Activated CD4-positive, alpha-beta T cell treated with anti-CD3 and anti-CD28 coated beads, Interleukin-2, amount 10 ng/mL, durations not matched to agents 24 days and 14 days (primary cell): ENCODE measurements at regions of chr2 and their contacts with region 1.

Region 1: DNA sequence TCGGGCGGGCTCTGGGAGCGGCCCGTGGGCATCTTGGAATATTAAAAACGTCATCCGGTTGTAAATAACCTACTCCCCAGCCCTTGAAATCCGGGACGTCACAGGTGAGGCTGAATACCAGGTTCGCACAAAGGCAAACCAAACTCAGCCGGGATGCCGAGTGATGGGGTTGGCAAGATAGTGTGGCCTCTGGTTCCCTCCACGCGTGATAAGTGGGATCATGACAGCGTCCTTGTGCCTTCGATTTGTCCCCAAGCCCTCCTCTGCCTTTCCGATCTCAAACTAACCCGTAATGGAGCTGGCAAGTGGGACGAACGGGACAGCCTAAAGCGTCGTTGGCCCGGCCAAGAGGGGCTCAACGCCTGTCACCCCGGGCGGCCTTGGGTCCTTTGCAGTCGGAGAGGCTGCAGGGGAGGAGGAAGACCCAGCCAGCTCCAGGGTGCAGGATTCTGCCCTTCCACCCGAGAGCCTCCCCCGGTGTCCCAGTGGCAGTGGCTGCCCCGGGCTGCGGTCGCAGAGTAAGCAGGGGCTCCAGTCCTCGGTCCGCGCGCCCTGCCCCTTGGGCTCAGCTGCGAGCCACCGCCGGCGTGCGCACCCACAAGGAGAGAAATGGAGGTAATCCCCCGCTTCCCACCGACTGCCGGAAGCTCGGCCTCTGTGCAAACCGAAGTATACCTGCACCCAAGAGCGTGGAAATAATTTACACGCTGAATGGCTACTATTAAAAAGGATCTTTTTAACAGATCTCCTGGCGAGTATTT is 13.4 kb upstream of the PAX3 start:
- DNase-seq: no peak
- H3K4me3 Mint-ChIP-seq: no peak overlapping the region
- H3K27ac Mint-ChIP-seq: peak overlapping the region; percentile 64
- H3K4me1 Mint-ChIP-seq: peaks cover 3% of the 10 kb centered on the region
- H3K27me3 Mint-ChIP-seq: peaks cover 98% of the 10 kb centered on the region

Region 2: DNA sequence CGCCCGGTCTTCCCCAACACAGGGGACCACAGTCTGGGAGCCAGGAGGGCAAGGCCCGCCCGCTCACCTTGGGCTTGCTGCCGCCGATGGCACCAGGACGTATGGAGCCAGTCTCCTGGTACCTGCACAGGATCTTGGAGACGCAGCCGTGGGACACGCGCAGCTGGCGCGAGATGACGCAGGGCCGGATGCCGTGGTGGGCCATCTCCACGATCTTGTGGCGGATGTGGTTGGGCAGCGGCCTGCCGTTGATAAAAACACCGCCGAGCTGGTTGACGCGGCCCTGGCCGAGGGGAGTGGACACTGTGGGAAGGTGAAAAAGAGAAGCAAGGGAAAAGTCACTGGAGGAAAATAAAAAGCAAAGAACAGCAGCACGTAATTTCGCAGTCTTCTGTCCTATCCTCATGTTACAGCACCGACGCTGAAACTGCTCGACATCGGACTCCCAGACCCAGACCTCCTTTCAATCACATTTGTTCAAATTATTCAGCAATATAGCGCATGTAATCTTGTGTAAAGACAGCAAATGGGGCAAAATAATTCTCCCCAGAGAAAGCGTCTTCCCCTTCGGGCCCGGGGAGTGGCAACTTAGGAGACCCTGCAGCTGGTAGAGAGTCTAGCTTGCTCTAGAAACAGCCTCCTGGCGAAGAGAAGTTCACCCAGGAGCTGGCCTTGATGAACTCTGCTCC is 15.1 kb before region 1 on chr2:
- intact Hi-C with region 1: loop called (anchors 1 kb)
- DNase-seq: peak; percentile 61
- H3K4me3 Mint-ChIP-seq: no peak overlapping the region
- H3K27ac Mint-ChIP-seq: no peak overlapping the region
- H3K4me1 Mint-ChIP-seq: peaks cover 18% of the 10 kb centered on the region
- H3K27me3 Mint-ChIP-seq: peaks cover 91% of the 10 kb centered on the region

Region 3: GRCh38 chr2:222582928-222583327 is 270.8 kb after region 1 on chr2:
- intact Hi-C with region 1: no loop called
- DNase-seq: no peak
- H3K4me3 Mint-ChIP-seq: no peak overlapping the region
- H3K27ac Mint-ChIP-seq: no peak overlapping the region
- H3K4me1 Mint-ChIP-seq: peaks cover 4% of the 10 kb centered on the region
- H3K27me3 Mint-ChIP-seq: no peaks in the 10 kb centered on the region